Activated CD8-positive, alpha-beta memory T cell treated with anti-CD3 and anti-CD28 coated beads, Interleukin-2, amount 10 ng/mL, durations not matched to agents 7 days and 5 days (primary cell): ENCODE measurements at regions of chr10 and their contacts with region 1.

Region 1: DNA sequence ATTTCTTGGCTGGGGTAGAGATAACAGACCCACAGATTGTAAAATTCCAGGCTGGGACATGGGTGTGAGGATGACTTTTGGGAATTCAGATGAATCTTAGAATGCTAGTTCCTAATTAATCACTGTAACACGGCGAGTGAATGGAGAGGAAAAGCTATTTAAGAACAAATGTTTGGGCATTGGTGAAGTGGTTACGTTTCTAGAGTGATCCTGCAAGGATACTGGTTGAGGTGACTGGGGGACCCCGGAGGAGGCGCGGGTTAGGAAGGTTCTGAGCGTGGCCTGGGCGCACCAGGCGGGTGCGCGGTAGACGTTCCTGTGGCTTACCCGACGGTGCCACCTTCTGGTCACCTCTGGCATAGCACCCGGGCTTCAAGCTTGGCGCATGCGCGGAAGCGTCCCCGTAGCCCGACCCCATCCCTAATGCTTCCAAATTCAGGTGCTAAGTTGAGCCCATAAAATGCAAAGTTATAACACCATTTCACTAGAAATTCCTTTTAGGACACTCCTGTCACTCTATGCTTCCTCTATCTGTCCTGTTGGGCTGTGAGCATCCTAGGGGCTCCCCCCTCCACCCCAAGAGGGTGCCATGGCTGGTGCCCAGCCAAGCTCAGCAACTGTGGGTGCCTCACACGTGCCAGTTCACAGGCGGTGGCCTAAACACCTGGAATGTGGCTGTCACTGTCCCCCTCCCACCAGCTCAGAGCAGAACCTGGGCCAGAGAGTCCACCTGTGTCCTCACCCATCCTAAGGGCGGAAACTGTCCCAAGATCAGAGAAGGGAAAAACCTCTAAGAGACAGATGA is 104.5 kb downstream of the PTPRE start:
- DNase-seq: peak; percentile 85
- ATAC-seq: peak; percentile 95
- H3K4me3 Mint-ChIP-seq: no peak overlapping the region
- H3K27ac Mint-ChIP-seq: no peak overlapping the region
- H3K4me1 Mint-ChIP-seq: peaks cover 6% of the 10 kb centered on the region
- H3K27me3 Mint-ChIP-seq: peaks cover 20% of the 10 kb centered on the region

Region 2: GRCh38 chr10:127548022-127548421 is 463.4 kb before region 1 on chr10:
- CTCF ChIA-PET with region 1: no interaction called
- DNase-seq: no peak
- ATAC-seq: no peak
- H3K4me3 Mint-ChIP-seq: no peak overlapping the region
- H3K27ac Mint-ChIP-seq: no peak overlapping the region
- H3K4me1 Mint-ChIP-seq: no peaks in the 10 kb centered on the region
- H3K27me3 Mint-ChIP-seq: no peaks in the 10 kb centered on the region

Region 3: GRCh38 chr10:127906548-127907377 is 104.6 kb before region 1 on chr10 and contains the start of gene PTPRE:
- CTCF ChIA-PET with region 1: interaction called, 96 read pairs
- DNase-seq: peak; percentile 58
- ATAC-seq: peak; percentile 97
- H3K4me3 Mint-ChIP-seq: no peak within 1 kb of the TSS
- H3K27ac Mint-ChIP-seq: no peak within 1 kb of the TSS
- H3K4me1 Mint-ChIP-seq: no peaks in the 10 kb centered on the region
- H3K27me3 Mint-ChIP-seq: peaks cover 53% of the 10 kb centered on the region
- total RNA-seq, gene PTPRE: 16.5 to 27.1 TPM

Region 4: GRCh38 chr10:127934383-127934782 is 77.0 kb before region 1 on chr10:
- CTCF ChIA-PET with region 1: no interaction called
- DNase-seq: no peak
- ATAC-seq: no peak
- H3K4me3 Mint-ChIP-seq: no peak overlapping the region
- H3K27ac Mint-ChIP-seq: no peak overlapping the region
- H3K4me1 Mint-ChIP-seq: no peaks in the 10 kb centered on the region
- H3K27me3 Mint-ChIP-seq: peaks cover 20% of the 10 kb centered on the region

Region 5: DNA sequence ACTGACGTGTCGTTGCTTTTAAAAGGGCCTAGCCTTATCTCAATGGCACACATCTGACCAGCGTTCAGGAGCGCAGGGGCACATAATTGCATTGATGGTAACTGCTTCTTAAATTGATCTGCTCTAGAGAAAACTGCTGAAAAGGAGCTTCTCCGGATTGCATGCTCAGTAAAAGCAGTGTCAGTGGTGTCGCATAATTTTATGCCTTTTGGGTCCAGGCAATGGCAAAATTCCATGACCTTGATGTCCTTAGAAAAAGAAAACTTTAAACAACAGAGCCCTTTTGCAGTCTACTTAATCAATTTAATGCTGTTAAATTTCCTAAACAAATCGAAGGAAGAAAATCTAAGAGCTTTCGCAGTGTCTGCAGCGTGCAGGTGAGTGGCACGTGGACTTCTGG is 28.8 kb before region 1 on chr10:
- CTCF ChIA-PET with region 1: interaction called, 11 read pairs
- DNase-seq: no peak
- ATAC-seq: no peak
- H3K4me3 Mint-ChIP-seq: no peak overlapping the region
- H3K27ac Mint-ChIP-seq: no peak overlapping the region
- H3K4me1 Mint-ChIP-seq: peaks cover 11% of the 10 kb centered on the region
- H3K27me3 Mint-ChIP-seq: peaks cover 8% of the 10 kb centered on the region

Region 6: DNA sequence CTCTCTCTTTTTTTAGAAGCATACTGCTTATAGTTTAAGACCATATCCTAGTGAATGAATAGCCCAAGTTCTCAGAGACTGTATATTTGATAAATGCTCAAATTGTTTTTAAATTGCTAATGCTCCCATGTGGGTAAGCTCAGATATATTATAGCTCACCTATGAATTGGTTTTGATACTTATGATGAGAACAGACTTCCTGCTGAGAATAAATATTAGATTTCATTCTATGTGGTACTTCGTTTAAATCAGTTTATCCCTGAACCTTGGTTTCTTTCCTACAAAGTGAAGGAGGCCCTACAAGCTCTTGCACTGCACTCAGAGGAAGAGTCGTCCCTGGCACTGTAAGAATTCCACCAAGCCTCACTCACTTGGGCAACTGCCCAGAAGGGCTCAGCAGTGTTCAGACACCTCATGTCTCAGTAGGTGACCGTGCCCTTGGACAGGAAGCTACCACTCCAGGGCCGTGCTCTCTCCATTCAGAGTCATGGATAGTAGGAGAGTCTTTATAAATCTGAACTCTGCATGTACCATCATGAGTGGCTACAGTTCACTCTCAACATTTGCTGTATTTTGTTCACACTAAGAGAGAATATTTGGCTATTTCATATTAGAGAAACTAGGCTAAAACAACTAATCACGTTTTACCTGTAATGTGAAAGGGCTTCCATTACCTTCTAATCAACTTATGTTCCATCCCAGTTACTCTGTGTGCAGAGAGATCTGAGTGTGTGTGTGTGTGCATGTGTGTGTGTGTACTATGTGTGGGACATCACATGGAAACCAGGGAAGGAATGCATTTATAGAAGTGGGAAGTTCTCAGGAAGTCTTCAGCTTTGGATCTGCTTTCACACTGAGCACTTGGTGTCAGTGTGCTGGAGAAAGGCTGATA is 10.7 kb before region 1 on chr10:
- CTCF ChIA-PET with region 1: interaction called, 12 read pairs
- DNase-seq: no peak
- ATAC-seq: no peak
- H3K4me3 Mint-ChIP-seq: no peak overlapping the region
- H3K27ac Mint-ChIP-seq: no peak overlapping the region
- H3K4me1 Mint-ChIP-seq: peaks cover 1% of the 10 kb centered on the region
- H3K27me3 Mint-ChIP-seq: peaks cover 53% of the 10 kb centered on the region

Region 7: DNA sequence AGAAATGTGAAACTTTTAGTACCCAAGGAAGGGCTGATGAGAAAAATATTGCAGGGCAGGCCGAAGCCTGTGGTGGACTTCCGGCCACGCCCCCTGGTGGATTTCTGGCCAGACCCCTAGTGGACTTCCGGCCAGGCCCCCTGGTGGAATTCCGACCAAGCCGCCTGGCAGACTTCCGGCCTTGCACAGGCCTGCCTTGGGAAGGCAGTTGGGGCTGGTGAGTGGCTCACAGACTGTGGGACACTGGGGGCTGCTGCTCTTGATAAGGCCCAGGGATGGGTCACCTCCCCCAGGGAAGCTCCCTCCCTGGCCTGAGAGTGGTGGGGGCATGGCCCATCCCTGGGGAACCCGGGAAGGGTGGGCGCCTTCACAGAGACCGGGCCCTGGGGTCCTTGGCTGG is 231.3 kb after region 1 on chr10:
- CTCF ChIA-PET with region 1: no interaction called
- DNase-seq: no peak
- ATAC-seq: no peak
- H3K4me3 Mint-ChIP-seq: no peak overlapping the region
- H3K27ac Mint-ChIP-seq: no peak overlapping the region
- H3K4me1 Mint-ChIP-seq: no peaks in the 10 kb centered on the region
- H3K27me3 Mint-ChIP-seq: peaks cover 3% of the 10 kb centered on the region